Right ventricle myocardium inferior (tissue), 1 donor: ENCODE measurements at regions of chr20 and their contacts with region 1.

Region 1: GRCh38 chr20:9344083-9344920 is 170.1 kb upstream of the LAMP5 start:
- DNase-seq: no peak
- ATAC-seq: peak; percentile 59

Region 2: GRCh38 chr20:8976303-8976702 is 368.0 kb before region 1 on chr20:
- intact Hi-C with region 1: loop called (anchors 10 kb)
- DNase-seq: no peak
- ATAC-seq: no peak